OCI-LY7 (cell line): ENCODE measurements at regions of chr17 and their contacts with region 1.

Region 1: GRCh38 chr17:34146440-34147043 is 108.5 kb upstream of the CCL2 start:
- DNase-seq: peak; percentile 55
- H3K4me3 ChIP-seq: no peak overlapping the region
- H3K27ac ChIP-seq: no peak overlapping the region
- H3K4me1 ChIP-seq: no peaks in the 10 kb centered on the region
- CTCF ChIP-seq: peak; percentile 86

Region 2: GRCh38 chr17:33779225-33779591 is 367.3 kb before region 1 on chr17:
- CTCF ChIA-PET with region 1: no interaction called
- POLR2A ChIA-PET with region 1: no interaction called
- intact Hi-C with region 1: loop called (anchors 2 kb)
- DNase-seq: peak; percentile 50
- H3K4me3 ChIP-seq: no peak overlapping the region
- H3K27ac ChIP-seq: no peak overlapping the region
- H3K4me1 ChIP-seq: no peaks in the 10 kb centered on the region
- CTCF ChIP-seq: peak; percentile 97